ENCODE measurements at regions of chr15 and their contacts with region 1.

Region 1: DNA sequence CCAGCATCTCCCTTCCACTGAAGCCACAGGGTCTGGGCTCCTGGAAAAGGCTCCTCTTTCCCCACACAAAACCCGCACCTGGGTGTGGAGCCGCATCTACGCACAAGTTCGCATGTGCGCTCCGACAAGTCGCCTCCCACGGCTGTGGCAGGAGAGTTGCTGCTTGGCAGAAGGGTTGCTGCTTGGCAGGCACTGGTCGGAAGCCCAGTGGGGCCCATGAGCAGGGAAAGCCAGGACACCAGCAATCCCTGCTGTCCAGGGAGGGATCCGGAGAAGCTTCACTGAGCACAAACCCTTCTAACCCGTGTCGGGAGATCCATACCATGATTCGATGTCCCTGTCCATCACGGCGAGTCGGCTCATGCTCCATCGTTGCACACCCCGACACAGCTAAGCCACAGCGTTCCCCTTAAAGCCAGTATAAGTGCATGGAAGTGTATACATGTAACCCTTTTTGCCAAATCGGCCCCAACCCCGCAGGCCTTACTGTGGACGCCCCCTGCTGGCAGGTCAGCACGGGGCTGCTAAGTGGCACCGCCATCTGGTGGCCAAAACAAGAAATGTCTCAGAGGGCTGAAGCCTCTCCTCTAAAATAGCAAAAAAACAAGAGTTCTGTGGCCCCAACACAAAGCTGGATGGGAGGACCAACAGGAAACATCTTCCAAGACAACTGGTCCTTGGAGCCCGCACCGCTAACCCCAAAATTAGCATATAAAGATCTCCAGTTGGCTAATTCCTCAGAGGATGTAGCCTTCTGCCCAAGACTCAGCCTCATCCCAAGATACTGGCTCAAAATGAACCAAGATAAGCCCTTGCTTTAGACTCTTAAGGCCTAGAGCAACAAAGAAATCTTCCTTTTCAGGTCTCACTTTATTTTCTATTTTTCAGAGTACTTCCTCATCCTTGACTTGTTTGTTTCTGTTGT is 8.3 kb downstream of the ANKRD63 start:
- DNase-seq: peak; percentile 81 to 88 (median 84)
- H3K4me3 ChIP-seq: no peak overlapping the region
- H3K4me3 Mint-ChIP-seq: no peak overlapping the region
- H3K27ac ChIP-seq: no peak overlapping the region
- H3K27ac Mint-ChIP-seq: peak overlapping the region in 3 of 7 donors; percentile 24 to 54 (median 32)
- H3K4me1 ChIP-seq: peaks cover 5% of the 10 kb centered on the region
- H3K4me1 Mint-ChIP-seq: peaks cover 2 to 11% (median 5%) of the 10 kb centered on the region in 4 donors
- H3K27me3 ChIP-seq: no peaks in the 10 kb centered on the region
- H3K27me3 Mint-ChIP-seq: peaks cover 3 to 18% of the 10 kb centered on the region in 2 donors

Region 2: DNA sequence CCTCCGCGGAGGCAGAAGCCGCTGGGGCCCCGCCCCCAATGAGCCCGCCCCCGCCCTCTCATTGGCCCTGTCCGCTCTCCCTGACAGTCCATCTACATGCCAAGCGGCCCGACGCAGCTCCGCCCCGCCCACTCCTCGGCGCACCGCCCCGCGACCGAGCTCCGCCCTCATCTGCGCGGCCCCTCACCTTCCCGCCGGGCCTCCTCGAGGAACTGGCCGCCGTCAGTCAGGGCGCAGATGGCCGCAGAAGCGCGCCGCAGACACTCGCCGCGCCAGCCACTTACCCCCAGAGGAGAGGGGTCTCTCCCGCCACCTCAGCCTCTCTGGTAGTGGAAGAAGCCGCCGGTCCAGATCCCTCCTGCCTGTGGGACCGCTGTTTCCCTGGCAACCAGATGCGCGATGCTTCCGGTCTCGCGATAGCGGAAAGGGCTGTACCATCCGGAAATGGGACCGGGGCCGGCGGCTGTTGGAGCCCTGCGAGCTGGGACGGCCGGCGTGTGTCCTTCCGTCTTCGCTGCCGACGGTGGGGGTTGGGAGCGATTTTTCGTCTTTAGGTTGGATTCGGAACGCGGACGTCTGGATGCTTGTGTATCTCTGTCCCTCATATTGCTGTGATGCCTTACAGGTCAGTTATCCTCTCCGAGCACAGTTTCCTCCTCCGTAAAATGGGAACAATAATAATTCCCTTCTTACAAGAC is 492.0 kb before region 1 on chr15 and contains the start of gene FSIP1:
- CTCF ChIA-PET with region 1: interaction called, 22 read pairs
- POLR2A ChIA-PET with region 1: no interaction called
- intact Hi-C with region 1: loop called (anchors 1 kb)
- DNase-seq: peak; percentile 96 to 99 (median 97)
- H3K4me3 ChIP-seq: peak within 1 kb of the TSS; percentile 97 to 100
- H3K4me3 Mint-ChIP-seq: peak within 1 kb of the TSS; percentile 88 to 98 (median 96)
- H3K27ac ChIP-seq: peak within 1 kb of the TSS; percentile 60
- H3K27ac Mint-ChIP-seq: peak within 1 kb of the TSS; percentile 83 to 97 (median 93)
- H3K4me1 ChIP-seq: peaks cover 38% of the 10 kb centered on the region
- H3K4me1 Mint-ChIP-seq: peaks cover 28 to 55% (median 44%) of the 10 kb centered on the region in 4 donors
- H3K27me3 ChIP-seq: no peaks in the 10 kb centered on the region
- H3K27me3 Mint-ChIP-seq: no peaks in the 10 kb centered on the region
- total RNA-seq, gene FSIP1: 0.47 to 1.1 TPM

Region 3: GRCh38 chr15:39976291-39977274 is 298.0 kb before region 1 on chr15:
- CTCF ChIA-PET with region 1: no interaction called
- POLR2A ChIA-PET with region 1: no interaction called
- intact Hi-C with region 1: no loop called
- DNase-seq: peak in 1 of 5 donors; percentile 19
- H3K4me3 ChIP-seq: no peak overlapping the region
- H3K4me3 Mint-ChIP-seq: peak overlapping the region in 6 of 8 donors; percentile 39 to 64 (median 56)
- H3K27ac ChIP-seq: no peak overlapping the region
- H3K27ac Mint-ChIP-seq: peak overlapping the region in 2 of 7 donors; percentile 32 to 82
- H3K4me1 ChIP-seq: no peaks in the 10 kb centered on the region
- H3K4me1 Mint-ChIP-seq: no peaks in the 10 kb centered on the region
- H3K27me3 ChIP-seq: no peaks in the 10 kb centered on the region
- H3K27me3 Mint-ChIP-seq: no peaks in the 10 kb centered on the region

Region 4: DNA sequence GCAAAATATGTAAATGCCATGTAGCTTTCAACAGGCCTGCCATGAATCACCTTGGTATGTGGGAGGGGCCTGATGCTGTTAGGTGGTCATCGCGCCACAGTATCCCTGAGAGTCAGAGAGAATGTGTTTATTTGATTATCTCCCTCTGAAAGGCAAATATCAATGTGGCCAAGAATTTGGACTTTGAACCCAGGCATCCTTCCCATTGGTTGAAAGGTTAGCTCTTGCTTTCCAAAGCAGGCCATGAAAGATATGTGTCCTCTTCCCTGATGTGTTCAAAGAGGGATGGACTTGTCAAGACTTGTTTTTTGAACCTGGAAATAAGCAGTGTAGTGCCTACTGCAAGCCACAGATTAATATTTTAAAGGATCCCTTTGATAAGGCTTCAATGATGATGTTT is 272.3 kb before region 1 on chr15:
- CTCF ChIA-PET with region 1: no interaction called
- POLR2A ChIA-PET with region 1: no interaction called
- intact Hi-C with region 1: no loop called
- DNase-seq: no peak
- H3K4me3 ChIP-seq: no peak overlapping the region
- H3K4me3 Mint-ChIP-seq: no peak overlapping the region
- H3K27ac ChIP-seq: no peak overlapping the region
- H3K27ac Mint-ChIP-seq: no peak overlapping the region
- H3K4me1 ChIP-seq: no peaks in the 10 kb centered on the region
- H3K4me1 Mint-ChIP-seq: no peaks in the 10 kb centered on the region
- H3K27me3 ChIP-seq: no peaks in the 10 kb centered on the region
- H3K27me3 Mint-ChIP-seq: no peaks in the 10 kb centered on the region

Region 5: GRCh38 chr15:40044717-40045571 is 229.7 kb before region 1 on chr15:
- CTCF ChIA-PET with region 1: interaction called, 178 read pairs
- POLR2A ChIA-PET with region 1: interaction called, 10 read pairs
- intact Hi-C with region 1: loop called (anchors 1 kb)
- DNase-seq: peak; percentile 70 to 82 (median 75)
- H3K4me3 ChIP-seq: peak overlapping the region in 1 of 2 donors; percentile 1
- H3K4me3 Mint-ChIP-seq: peak overlapping the region; percentile 1 to 73 (median 46)
- H3K27ac ChIP-seq: peak overlapping the region; percentile 24
- H3K27ac Mint-ChIP-seq: peak overlapping the region in 6 of 7 donors; percentile 47 to 91 (median 73)
- H3K4me1 ChIP-seq: peaks cover 55% of the 10 kb centered on the region
- H3K4me1 Mint-ChIP-seq: peaks cover 36 to 61% (median 41%) of the 10 kb centered on the region in 4 donors
- H3K27me3 ChIP-seq: no peaks in the 10 kb centered on the region
- H3K27me3 Mint-ChIP-seq: no peaks in the 10 kb centered on the region

Region 6: GRCh38 chr15:40226736-40227135 is 47.9 kb before region 1 on chr15:
- CTCF ChIA-PET with region 1: interaction called, 10 read pairs
- POLR2A ChIA-PET with region 1: no interaction called
- intact Hi-C with region 1: no loop called
- DNase-seq: no peak
- H3K4me3 ChIP-seq: no peak overlapping the region
- H3K4me3 Mint-ChIP-seq: no peak overlapping the region
- H3K27ac ChIP-seq: no peak overlapping the region
- H3K27ac Mint-ChIP-seq: no peak overlapping the region
- H3K4me1 ChIP-seq: peaks cover 6% of the 10 kb centered on the region
- H3K4me1 Mint-ChIP-seq: no peaks in the 10 kb centered on the region
- H3K27me3 ChIP-seq: no peaks in the 10 kb centered on the region
- H3K27me3 Mint-ChIP-seq: no peaks in the 10 kb centered on the region

Region 7: GRCh38 chr15:40290918-40291574 is 16.4 kb after region 1 on chr15:
- CTCF ChIA-PET with region 1: interaction called, 29 read pairs
- POLR2A ChIA-PET with region 1: no interaction called
- intact Hi-C with region 1: no loop called
- DNase-seq: no peak
- H3K4me3 ChIP-seq: no peak overlapping the region
- H3K4me3 Mint-ChIP-seq: no peak overlapping the region
- H3K27ac ChIP-seq: no peak overlapping the region
- H3K27ac Mint-ChIP-seq: no peak overlapping the region
- H3K4me1 ChIP-seq: no peaks in the 10 kb centered on the region
- H3K4me1 Mint-ChIP-seq: peaks cover 0 to 2% (median 0%) of the 10 kb centered on the region in 4 donors
- H3K27me3 ChIP-seq: no peaks in the 10 kb centered on the region
- H3K27me3 Mint-ChIP-seq: no peaks in the 10 kb centered on the region

Region 8: GRCh38 chr15:40338041-40338657 is 63.5 kb after region 1 on chr15:
- CTCF ChIA-PET with region 1: interaction called, 324 read pairs
- POLR2A ChIA-PET with region 1: interaction called, 5 read pairs
- intact Hi-C with region 1: loop called (anchors 1 kb)
- DNase-seq: peak; percentile 69 to 72 (median 71)
- H3K4me3 ChIP-seq: no peak overlapping the region
- H3K4me3 Mint-ChIP-seq: peak overlapping the region in 1 of 8 donors; percentile 46
- H3K27ac ChIP-seq: no peak overlapping the region
- H3K27ac Mint-ChIP-seq: no peak overlapping the region
- H3K4me1 ChIP-seq: peaks cover 15% of the 10 kb centered on the region
- H3K4me1 Mint-ChIP-seq: peaks cover 7 to 16% (median 9%) of the 10 kb centered on the region in 4 donors
- H3K27me3 ChIP-seq: no peaks in the 10 kb centered on the region
- H3K27me3 Mint-ChIP-seq: peaks cover 0 to 2% of the 10 kb centered on the region in 2 donors

Region 9: DNA sequence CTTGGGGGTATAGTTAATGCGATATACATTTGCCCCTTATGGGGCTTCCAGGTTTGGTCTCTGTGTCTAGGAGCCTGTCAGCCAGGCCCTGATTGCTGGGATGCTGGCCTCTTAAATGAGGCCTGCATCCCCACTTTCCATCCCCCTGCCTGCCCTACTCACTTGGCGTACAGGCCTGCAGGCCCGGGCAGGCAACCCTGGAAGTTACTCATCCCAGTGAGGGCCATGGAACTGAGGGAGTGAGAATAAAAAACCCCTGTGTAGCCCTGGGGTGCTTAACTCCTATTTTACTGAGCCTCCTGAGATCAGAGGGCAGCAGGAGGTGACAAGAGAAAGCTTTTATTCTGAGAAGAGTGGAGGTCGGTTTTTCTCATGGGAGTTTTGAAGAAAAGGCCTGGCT is 85.4 kb after region 1 on chr15:
- CTCF ChIA-PET with region 1: no interaction called
- POLR2A ChIA-PET with region 1: no interaction called
- intact Hi-C with region 1: no loop called
- DNase-seq: no peak
- H3K4me3 ChIP-seq: no peak overlapping the region
- H3K4me3 Mint-ChIP-seq: no peak overlapping the region
- H3K27ac ChIP-seq: no peak overlapping the region
- H3K27ac Mint-ChIP-seq: no peak overlapping the region
- H3K4me1 ChIP-seq: peaks cover 13% of the 10 kb centered on the region
- H3K4me1 Mint-ChIP-seq: peaks cover 5 to 21% (median 7%) of the 10 kb centered on the region in 4 donors
- H3K27me3 ChIP-seq: no peaks in the 10 kb centered on the region
- H3K27me3 Mint-ChIP-seq: peaks cover 0 to 4% of the 10 kb centered on the region in 2 donors